OCI-LY7 (cell line): ENCODE measurements at regions of chr4 and their contacts with region 1.

Region 1: DNA sequence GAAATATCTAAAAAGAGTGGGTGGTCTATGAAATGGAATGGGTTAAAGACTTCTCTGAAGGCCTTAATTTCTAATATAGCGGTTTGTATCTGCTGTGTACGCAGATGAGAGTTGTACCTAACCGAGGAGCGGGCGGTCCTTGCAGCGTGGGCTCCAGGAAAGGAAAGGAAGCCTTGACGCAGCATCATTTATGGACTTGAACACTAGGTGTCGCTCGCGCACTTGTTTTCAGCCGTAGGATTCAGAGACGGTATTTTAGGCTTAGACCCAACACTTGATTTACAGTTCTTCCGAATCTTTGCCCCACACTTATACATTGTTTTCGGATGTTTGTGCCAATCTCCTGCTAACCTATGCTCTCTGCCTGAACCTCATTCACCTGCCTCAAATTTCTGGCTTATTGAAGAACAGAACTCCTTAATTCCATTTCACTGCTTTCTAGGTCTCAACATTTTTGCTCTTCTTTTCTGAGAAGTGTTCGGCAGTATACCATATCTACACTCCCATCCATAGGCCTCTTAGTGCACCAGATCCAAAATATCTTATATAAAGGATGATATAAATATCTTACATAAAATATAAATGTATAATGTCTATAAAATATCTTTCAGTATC is 48.9 kb upstream of the AADAT start:
- DNase-seq: peak; percentile 62
- H3K4me3 ChIP-seq: no peak overlapping the region
- H3K27ac ChIP-seq: no peak overlapping the region
- H3K4me1 ChIP-seq: no peaks in the 10 kb centered on the region
- CTCF ChIP-seq: peak; percentile 84

Region 2: DNA sequence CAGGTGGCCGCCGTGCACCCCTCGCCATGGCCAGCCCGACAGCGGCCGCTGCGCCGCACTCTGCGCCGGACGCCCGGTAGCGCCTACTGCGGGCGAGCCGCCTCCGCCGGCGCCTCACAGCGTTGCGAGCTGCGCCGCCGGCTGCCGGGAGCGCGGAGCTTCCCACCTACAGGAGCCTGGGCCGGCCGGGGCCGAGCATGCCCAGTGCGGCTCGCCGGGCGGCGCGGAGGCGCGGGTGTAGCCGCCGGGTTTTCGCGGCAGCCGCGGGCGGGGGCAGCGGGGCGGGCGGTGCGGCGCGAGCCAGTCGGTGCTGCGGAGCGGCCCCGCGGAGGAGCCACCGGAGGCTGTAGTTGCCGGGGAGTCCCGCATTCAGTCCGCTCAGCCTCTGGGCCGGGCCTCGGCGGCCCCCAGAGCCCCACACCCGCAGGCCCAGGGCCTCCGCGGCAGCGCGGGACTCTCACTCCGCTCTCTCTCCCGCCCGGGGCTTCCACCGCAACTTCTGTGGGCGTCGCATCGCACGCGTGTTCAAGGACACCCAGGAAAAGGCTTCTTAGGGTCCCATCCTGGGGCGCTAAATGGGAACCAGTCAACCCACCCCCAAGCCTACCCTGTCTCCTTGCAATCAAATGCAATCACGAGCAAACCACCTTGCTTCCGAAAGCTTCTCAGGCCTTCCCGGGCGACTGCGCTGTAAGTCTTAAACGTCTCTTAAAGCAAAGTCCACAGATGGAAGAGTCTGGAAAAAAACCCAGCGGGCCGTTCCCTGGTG is 112.2 kb before region 1 on chr4 and contains the start of gene MFAP3L:
- CTCF ChIA-PET with region 1: no interaction called
- POLR2A ChIA-PET with region 1: no interaction called
- intact Hi-C with region 1: no loop called
- DNase-seq: no peak
- H3K4me3 ChIP-seq: peak within 1 kb of the TSS; percentile 32
- H3K27ac ChIP-seq: no peak within 1 kb of the TSS
- H3K4me1 ChIP-seq: no peaks in the 10 kb centered on the region
- CTCF ChIP-seq: no peak
- total RNA-seq, gene MFAP3L: not detected in 2 replicates

Region 3: GRCh38 chr4:170374770-170375169 is 236.1 kb after region 1 on chr4:
- CTCF ChIA-PET with region 1: no interaction called
- POLR2A ChIA-PET with region 1: no interaction called
- intact Hi-C with region 1: loop called (anchors 2 kb)
- DNase-seq: peak; percentile 32
- H3K4me3 ChIP-seq: no peak overlapping the region
- H3K27ac ChIP-seq: no peak overlapping the region
- H3K4me1 ChIP-seq: no peaks in the 10 kb centered on the region
- CTCF ChIP-seq: peak; percentile 75